ENCODE measurements at regions of chr15 and their contacts with region 1.

Region 1: GRCh38 chr15:39426552-39427532 is 154.0 kb upstream of the THBS1 start:
- DNase-seq: peak; percentile 90
- H3K4me3 Mint-ChIP-seq: peak overlapping the region; percentile 13
- H3K27ac Mint-ChIP-seq: peak overlapping the region; percentile 34
- H3K4me1 Mint-ChIP-seq: peaks cover 27% of the 10 kb centered on the region
- H3K27me3 Mint-ChIP-seq: peaks cover 30% of the 10 kb centered on the region

Region 2: DNA sequence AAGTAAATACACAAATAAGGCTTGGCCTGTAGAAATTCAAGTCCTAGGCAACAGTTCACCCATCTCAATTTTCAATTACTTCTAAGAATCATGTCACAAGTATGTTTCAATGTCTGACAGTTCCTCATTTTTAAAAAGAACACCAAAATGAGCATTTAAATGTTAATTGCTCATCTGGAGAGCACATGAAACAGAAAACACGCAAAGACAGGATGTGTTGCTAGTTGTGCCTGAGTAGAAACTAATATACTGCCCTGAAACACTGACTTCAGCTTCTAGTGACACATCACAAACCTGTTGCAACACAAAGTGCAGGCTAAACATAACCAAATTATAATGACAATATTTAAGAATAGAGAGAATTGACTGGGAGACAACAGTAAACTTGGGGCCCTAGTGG is 13.3 kb before region 1 on chr15:
- CTCF ChIA-PET with region 1: no interaction called
- POLR2A ChIA-PET with region 1: no interaction called
- intact Hi-C with region 1: loop called (anchors 2 kb)
- DNase-seq: no peak
- H3K4me3 Mint-ChIP-seq: no peak overlapping the region
- H3K27ac Mint-ChIP-seq: no peak overlapping the region
- H3K4me1 Mint-ChIP-seq: peaks cover 7% of the 10 kb centered on the region
- H3K27me3 Mint-ChIP-seq: peaks cover 32% of the 10 kb centered on the region

Measured in activated CD4-positive, alpha-beta memory T cell treated with anti-CD3 and anti-CD28 coated beads for 36 hours (primary cell).